Adrenal gland (tissue), 19 donors: ENCODE measurements at regions of chr16 and their contacts with region 1.

Region 1: DNA sequence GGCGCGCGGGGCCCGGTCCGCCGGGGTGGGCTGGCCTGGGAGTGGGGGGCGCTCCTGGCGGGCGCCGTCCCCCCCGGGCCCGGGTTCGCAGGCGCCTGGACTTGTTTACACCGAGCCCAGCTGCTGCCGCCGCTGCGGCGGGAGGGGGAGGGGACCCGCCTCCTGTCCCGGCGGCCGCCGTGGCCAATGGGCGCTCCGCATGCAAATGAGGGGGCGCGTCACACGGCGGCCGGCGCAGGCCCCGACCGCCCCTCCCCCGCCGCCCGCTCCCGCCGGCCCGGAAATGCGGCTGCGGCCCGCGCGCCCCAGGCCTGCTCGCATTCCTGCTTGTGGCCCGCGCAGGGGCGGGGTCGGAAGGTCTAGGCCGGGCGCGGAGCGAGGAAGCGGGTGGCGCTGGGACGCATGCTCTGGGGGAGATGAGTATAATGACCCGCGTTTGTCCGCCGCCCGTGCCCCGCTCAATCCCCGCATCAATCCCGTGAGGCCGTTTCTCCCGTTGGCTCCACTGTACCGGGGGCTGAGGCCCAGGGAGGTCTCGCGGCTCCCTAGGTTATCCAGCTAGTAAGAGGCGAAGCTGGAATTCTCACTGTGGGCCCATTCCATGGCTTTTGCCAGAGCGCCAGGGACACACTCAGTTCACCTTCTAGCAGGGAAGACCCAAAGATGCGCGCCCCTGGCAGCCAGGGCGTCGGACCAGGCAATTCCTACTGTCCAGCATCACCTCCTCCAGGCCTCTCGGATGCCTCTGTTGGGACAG is at the start of gene YPEL3:
- DNase-seq: peak; percentile 91 to 96 (median 95)
- H3K4me3 ChIP-seq: peak within 1 kb of the TSS in 3 of 4 donors; percentile 70 to 96 (median 75)
- H3K27ac ChIP-seq: peak within 1 kb of the TSS; percentile 69 to 93 (median 84)
- H3K4me1 ChIP-seq: peaks cover 17 to 33% of the 10 kb centered on the region in 2 donors
- H3K27me3 ChIP-seq: no peaks in the 10 kb centered on the region
- CTCF ChIP-seq: no peak
- POLR2A ChIP-seq: peak in 1 of 2 donors; percentile 75
- total RNA-seq, gene YPEL3: 18.9 to 210 (median 85.1) TPM

Region 2: DNA sequence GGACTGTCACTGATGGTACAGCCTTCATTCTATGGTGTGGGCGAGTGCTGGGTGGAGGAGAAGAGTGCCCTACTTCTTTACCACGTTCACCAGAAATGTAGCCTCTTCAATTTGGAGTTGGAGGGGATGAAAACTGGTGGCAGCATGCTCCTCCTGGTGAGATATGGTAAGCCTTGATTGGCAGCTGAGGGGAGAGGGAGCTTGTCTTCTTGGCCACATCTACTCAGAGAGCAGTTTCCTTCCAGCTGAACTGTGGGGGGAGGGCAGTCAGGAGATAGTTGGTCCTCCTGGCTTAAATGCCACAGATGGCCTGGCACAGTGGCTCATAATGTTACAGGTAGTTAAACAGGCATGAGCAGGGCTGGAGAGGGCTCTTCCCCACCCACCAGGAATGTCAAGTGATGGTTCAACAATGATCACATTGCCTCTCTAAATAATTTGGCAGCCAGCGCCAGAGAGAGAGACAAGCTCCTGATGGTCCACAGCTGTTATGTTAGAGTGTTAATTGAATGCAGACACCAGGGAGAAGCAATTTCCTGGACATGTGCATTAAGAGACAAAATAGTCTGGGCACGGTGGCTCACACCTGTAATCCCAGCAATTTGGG is 35.7 kb after region 1 on chr16:
- intact Hi-C with region 1: loop called in 1 of 2 experiments (anchors 5 kb)
- DNase-seq: no peak
- H3K4me3 ChIP-seq: no peak overlapping the region
- H3K27ac ChIP-seq: no peak overlapping the region
- H3K4me1 ChIP-seq: no peaks in the 10 kb centered on the region
- H3K27me3 ChIP-seq: no peaks in the 10 kb centered on the region
- CTCF ChIP-seq: no peak
- POLR2A ChIP-seq: no peak

Region 3: GRCh38 chr16:30166202-30166902 is 70.1 kb after region 1 on chr16:
- intact Hi-C with region 1: no loop called
- DNase-seq: no peak
- H3K4me3 ChIP-seq: no peak overlapping the region
- H3K27ac ChIP-seq: no peak overlapping the region
- H3K4me1 ChIP-seq: no peaks in the 10 kb centered on the region
- H3K27me3 ChIP-seq: no peaks in the 10 kb centered on the region
- CTCF ChIP-seq: no peak
- POLR2A ChIP-seq: no peak

Region 4: GRCh38 chr16:30183233-30184095 is 87.2 kb after region 1 on chr16 and contains the start of gene CORO1A:
- intact Hi-C with region 1: no loop called
- DNase-seq: peak; percentile 81 to 89 (median 82)
- H3K4me3 ChIP-seq: peak within 1 kb of the TSS in 2 of 4 donors; percentile 51 to 72
- H3K27ac ChIP-seq: peak within 1 kb of the TSS in 4 of 5 donors; percentile 57 to 81 (median 64)
- H3K4me1 ChIP-seq: peaks cover 0 to 3% of the 10 kb centered on the region in 2 donors
- H3K27me3 ChIP-seq: no peaks in the 10 kb centered on the region
- CTCF ChIP-seq: no peak
- POLR2A ChIP-seq: peak in 1 of 2 donors; percentile 15
- total RNA-seq, gene CORO1A: 3.3 to 69.1 (median 39.6) TPM

Region 5: GRCh38 chr16:30351586-30352336 is 255.5 kb after region 1 on chr16:
- intact Hi-C with region 1: no loop called
- DNase-seq: peak; percentile 93 to 97 (median 96)
- H3K4me3 ChIP-seq: no peak overlapping the region
- H3K27ac ChIP-seq: peak overlapping the region; percentile 32 to 98 (median 88)
- H3K4me1 ChIP-seq: peaks cover 39 to 40% of the 10 kb centered on the region in 2 donors
- H3K27me3 ChIP-seq: no peaks in the 10 kb centered on the region
- CTCF ChIP-seq: no peak
- POLR2A ChIP-seq: no peak